A673 (cell line): ENCODE measurements at regions of chr9 and their contacts with region 1.

Region 1: GRCh38 chr9:115117999-115118878 is at the start of gene TNC:
- DNase-seq: peak; percentile 96
- H3K4me3 ChIP-seq: peak within 1 kb of the TSS; percentile 52
- H3K27ac ChIP-seq: peak within 1 kb of the TSS; percentile 82
- H3K4me1 ChIP-seq: peaks cover 36% of the 10 kb centered on the region
- H3K27me3 ChIP-seq: no peaks in the 10 kb centered on the region
- CTCF ChIP-seq: no peak
- total RNA-seq, gene TNC: 202 and 206 TPM in 2 replicates

Region 2: DNA sequence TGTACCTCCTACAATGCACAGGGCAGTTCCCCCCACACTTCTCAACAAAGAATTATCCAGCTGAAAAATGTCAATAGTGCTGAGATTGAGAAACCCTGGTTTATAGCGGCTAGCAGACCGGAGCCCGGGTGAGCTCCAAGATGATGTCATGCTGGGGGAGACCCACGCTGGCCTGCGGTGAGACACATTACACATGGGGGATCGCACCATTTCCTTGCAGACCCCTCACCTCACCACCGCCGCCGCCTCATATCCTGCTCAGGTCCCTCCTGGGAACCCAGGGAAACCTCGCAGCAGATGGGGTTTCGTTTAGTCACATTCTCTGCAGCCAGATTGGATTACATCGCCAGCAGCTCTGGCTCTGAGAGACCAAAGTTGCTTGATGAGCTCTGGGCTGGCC is 14.4 kb after region 1 on chr9:
- CTCF ChIA-PET with region 1: no interaction called
- POLR2A ChIA-PET with region 1: no interaction called
- intact Hi-C with region 1: no loop called
- DNase-seq: no peak
- H3K4me3 ChIP-seq: no peak overlapping the region
- H3K27ac ChIP-seq: no peak overlapping the region
- H3K4me1 ChIP-seq: peaks cover 6% of the 10 kb centered on the region
- H3K27me3 ChIP-seq: no peaks in the 10 kb centered on the region
- CTCF ChIP-seq: no peak

Region 3: GRCh38 chr9:115204904-115205453 is 86.7 kb after region 1 on chr9:
- CTCF ChIA-PET with region 1: no interaction called
- POLR2A ChIA-PET with region 1: interaction called, 3 read pairs
- intact Hi-C with region 1: loop called (anchors 5 kb)
- DNase-seq: no peak
- H3K4me3 ChIP-seq: no peak overlapping the region
- H3K27ac ChIP-seq: no peak overlapping the region
- H3K4me1 ChIP-seq: peaks cover 33% of the 10 kb centered on the region
- H3K27me3 ChIP-seq: no peaks in the 10 kb centered on the region
- CTCF ChIP-seq: no peak

Region 4: DNA sequence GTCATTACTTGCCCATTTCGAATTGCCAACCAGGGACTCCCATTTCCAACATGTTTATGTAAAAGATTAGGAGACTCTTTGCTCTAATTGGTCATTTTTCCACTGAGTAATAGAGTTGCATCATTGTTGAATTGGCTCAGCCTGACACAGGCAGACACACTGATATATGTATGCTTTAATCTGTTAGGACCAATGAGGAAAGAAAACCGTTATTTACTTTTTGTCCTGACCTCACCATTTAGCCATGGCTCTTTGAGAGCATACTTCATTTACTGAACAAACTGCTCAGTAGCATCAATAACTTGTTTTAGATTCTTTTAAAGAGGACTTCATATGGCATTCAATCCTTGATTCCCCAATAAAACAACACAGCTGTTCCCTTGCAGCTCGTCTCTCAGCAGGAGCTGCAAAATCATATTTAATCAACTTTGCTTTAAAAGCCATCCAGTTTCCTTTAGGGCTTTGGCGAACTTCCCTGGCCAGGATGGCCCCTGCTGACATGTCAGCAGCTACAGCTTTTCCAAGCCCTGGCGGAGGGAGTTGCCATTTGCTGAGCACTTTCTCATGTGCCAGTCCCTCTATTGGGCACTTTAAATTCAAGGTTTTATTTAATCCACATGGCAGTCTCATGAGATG is 251.2 kb after region 1 on chr9:
- CTCF ChIA-PET with region 1: no interaction called
- POLR2A ChIA-PET with region 1: no interaction called
- intact Hi-C with region 1: loop called (anchors 5 kb)
- DNase-seq: peak; percentile 96
- H3K4me3 ChIP-seq: no peak overlapping the region
- H3K27ac ChIP-seq: peak overlapping the region; percentile 93
- H3K4me1 ChIP-seq: peaks cover 44% of the 10 kb centered on the region
- H3K27me3 ChIP-seq: no peaks in the 10 kb centered on the region
- CTCF ChIP-seq: peak; percentile 14; the same call in 1 of the 2 replicates

Region 5: GRCh38 chr9:115400796-115401195 is 282.6 kb after region 1 on chr9:
- CTCF ChIA-PET with region 1: no interaction called
- POLR2A ChIA-PET with region 1: no interaction called
- intact Hi-C with region 1: no loop called
- DNase-seq: no peak
- H3K4me3 ChIP-seq: no peak overlapping the region
- H3K27ac ChIP-seq: no peak overlapping the region
- H3K4me1 ChIP-seq: peaks cover 51% of the 10 kb centered on the region
- H3K27me3 ChIP-seq: no peaks in the 10 kb centered on the region
- CTCF ChIP-seq: no peak

Region 6: DNA sequence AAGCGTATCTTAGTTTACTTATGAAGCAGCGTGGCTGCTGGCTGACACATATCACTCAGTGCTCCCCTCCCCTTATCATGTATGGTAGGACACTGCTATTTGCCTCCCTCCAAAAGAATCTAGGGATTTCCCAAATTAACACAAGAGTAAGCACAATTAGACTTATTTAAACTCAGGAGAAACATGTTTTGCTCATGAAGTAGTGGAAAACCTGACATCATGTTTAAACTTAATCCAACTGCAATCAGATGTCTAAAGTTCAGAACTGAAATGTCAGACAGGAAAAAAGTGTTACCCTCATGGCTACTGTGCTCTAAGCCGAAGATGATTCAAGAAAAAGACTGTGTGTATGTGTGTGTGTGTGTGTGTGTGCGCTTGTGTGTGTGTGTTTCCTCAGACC is 323.8 kb after region 1 on chr9:
- CTCF ChIA-PET with region 1: no interaction called
- POLR2A ChIA-PET with region 1: no interaction called
- intact Hi-C with region 1: no loop called
- DNase-seq: no peak
- H3K4me3 ChIP-seq: no peak overlapping the region
- H3K27ac ChIP-seq: no peak overlapping the region
- H3K4me1 ChIP-seq: peaks cover 14% of the 10 kb centered on the region
- H3K27me3 ChIP-seq: no peaks in the 10 kb centered on the region
- CTCF ChIP-seq: no peak

Region 7: DNA sequence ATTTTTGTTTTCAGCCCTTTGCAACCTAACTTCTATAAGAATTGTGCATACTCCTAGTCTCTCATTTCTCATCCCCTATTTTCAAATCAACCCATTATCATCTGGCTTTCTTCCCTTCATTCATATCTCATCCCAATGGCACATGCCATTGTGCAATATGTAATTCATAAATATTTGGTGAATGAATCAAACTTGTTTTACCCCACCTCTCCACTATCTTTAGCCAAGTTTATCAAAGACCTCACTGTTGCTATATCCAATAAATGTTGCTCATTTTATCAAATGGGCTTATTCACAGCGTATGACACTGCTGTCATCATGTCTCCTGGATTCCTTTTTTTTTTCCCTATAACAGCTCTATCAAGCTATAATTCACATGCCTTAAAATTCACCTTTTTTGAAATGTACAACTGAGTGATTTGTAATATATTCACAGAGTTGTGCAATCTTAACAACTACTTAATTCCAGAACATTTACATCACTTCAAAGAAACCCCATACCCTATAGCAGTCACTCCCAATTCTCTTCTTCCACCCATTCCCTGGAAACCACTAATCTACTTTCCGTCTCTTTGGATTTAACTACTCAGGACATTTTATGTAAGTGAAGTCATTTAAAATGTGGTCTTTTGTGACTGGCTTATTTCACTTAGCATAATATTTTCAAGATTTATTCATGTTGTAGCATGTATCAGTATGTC is 821.0 kb after region 1 on chr9:
- CTCF ChIA-PET with region 1: no interaction called
- POLR2A ChIA-PET with region 1: no interaction called
- intact Hi-C with region 1: no loop called
- DNase-seq: no peak
- H3K4me3 ChIP-seq: no peak overlapping the region
- H3K27ac ChIP-seq: no peak overlapping the region
- H3K4me1 ChIP-seq: peaks cover 9% of the 10 kb centered on the region
- H3K27me3 ChIP-seq: no peaks in the 10 kb centered on the region
- CTCF ChIP-seq: no peak